ENCODE measurements at regions of chr15 and their contacts with region 1.

Region 1: GRCh38 chr15:73273181-73274002 is 95.4 kb downstream of the HCN4 start:
- DNase-seq: peak; percentile 50 to 68 (median 63)
- H3K4me3 ChIP-seq: no peak overlapping the region
- H3K27ac ChIP-seq: no peak overlapping the region
- H3K4me1 ChIP-seq: no peaks in the 10 kb centered on the region
- H3K27me3 ChIP-seq: peaks cover 0 to 5% (median 2%) of the 10 kb centered on the region in 5 experiments

Region 2: DNA sequence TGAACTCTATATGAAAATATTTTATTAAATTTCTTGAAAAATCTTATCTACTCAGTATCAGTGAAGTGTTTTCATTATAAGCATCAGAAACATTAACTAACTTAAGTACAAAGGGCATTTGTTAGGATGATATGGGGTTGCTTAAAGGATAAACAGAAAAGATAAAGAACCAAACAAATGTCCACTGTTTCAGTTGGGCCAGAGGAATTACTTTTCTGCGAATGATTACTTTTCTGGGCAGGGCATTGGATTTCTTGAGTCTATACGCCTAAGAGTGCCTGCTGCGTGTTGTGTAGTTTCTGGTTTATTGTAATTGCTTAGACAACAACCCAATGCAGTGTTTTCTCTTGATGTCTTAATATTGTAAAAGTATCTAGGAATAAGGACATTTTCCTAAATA is 168.3 kb before region 1 on chr15:
- CTCF ChIA-PET with region 1: no interaction called
- POLR2A ChIA-PET with region 1: no interaction called
- DNase-seq: no peak
- H3K4me3 ChIP-seq: no peak overlapping the region
- H3K27ac ChIP-seq: no peak overlapping the region
- H3K4me1 ChIP-seq: no peaks in the 10 kb centered on the region
- H3K27me3 ChIP-seq: peaks cover 6 to 45% (median 20%) of the 10 kb centered on the region in 5 experiments

Region 3: GRCh38 chr15:73118055-73118454 is 155.3 kb before region 1 on chr15:
- CTCF ChIA-PET with region 1: no interaction called
- POLR2A ChIA-PET with region 1: no interaction called
- DNase-seq: no peak
- H3K4me3 ChIP-seq: no peak overlapping the region
- H3K27ac ChIP-seq: no peak overlapping the region
- H3K4me1 ChIP-seq: no peaks in the 10 kb centered on the region
- H3K27me3 ChIP-seq: peaks cover 4 to 37% (median 16%) of the 10 kb centered on the region in 5 experiments

Region 4: GRCh38 chr15:73240866-73241499 is 32.4 kb before region 1 on chr15:
- CTCF ChIA-PET with region 1: interaction called, 13 read pairs
- POLR2A ChIA-PET with region 1: no interaction called
- DNase-seq: peak; percentile 72 to 87 (median 82)
- H3K4me3 ChIP-seq: no peak overlapping the region
- H3K27ac ChIP-seq: no peak overlapping the region
- H3K4me1 ChIP-seq: no peaks in the 10 kb centered on the region
- H3K27me3 ChIP-seq: peaks cover 1 to 12% (median 4%) of the 10 kb centered on the region in 5 experiments

Region 5: DNA sequence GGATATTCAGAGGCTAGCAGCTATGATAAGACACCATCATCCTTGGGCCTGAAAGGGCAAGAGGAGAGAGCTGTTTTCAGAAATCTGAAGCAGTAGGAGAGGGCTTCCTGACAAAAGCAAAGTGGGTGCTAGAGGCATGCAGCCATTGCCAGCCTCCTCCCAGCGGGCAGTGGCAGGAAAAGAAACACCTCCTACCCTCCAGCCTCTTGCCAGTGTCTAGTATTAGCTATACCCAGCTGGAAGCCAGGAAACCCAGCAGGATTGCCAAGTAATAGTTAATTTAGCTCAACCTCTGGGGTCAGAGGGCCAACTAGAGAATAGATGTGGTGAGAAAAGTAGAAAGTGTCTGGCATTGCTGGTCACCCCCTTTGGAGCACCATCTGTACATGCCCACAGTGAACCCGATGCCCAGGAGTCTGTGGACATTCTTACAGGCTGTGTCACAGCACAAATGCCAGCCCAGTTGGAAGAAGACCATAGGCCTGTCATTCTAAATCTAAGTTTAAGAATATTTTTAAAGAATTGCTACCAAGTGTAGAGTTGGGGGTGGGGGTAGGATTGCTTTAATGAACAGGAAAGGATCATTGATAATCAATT is 10.1 kb after region 1 on chr15:
- CTCF ChIA-PET with region 1: interaction called, 10 read pairs
- POLR2A ChIA-PET with region 1: no interaction called
- DNase-seq: no peak
- H3K4me3 ChIP-seq: no peak overlapping the region
- H3K27ac ChIP-seq: no peak overlapping the region
- H3K4me1 ChIP-seq: peaks cover 0 to 7% (median 0%) of the 10 kb centered on the region in 4 experiments
- H3K27me3 ChIP-seq: peaks cover 0 to 10% (median 0%) of the 10 kb centered on the region in 5 experiments